ENCODE measurements at regions of chr10 and their contacts with region 1.

Region 1: GRCh38 chr10:125048101-125048864 is 106.4 kb downstream of the ZRANB1 start:
- DNase-seq: no peak
- ATAC-seq: peak; percentile 99
- H3K4me3 ChIP-seq: no peak overlapping the region
- H3K27ac ChIP-seq: no peak overlapping the region
- H3K4me1 ChIP-seq: no peaks in the 10 kb centered on the region
- H3K27me3 ChIP-seq: peaks cover 2 to 7% of the 10 kb centered on the region in 2 experiments; a peak in 3 of 4 replicates
- CTCF ChIP-seq: peak; percentile 95 to 96 (median 95)
- EP300 ChIP-seq: no peak
- POLR2A ChIP-seq: no peak
- RAD21 ChIP-seq: peak; percentile 94

Region 2: DNA sequence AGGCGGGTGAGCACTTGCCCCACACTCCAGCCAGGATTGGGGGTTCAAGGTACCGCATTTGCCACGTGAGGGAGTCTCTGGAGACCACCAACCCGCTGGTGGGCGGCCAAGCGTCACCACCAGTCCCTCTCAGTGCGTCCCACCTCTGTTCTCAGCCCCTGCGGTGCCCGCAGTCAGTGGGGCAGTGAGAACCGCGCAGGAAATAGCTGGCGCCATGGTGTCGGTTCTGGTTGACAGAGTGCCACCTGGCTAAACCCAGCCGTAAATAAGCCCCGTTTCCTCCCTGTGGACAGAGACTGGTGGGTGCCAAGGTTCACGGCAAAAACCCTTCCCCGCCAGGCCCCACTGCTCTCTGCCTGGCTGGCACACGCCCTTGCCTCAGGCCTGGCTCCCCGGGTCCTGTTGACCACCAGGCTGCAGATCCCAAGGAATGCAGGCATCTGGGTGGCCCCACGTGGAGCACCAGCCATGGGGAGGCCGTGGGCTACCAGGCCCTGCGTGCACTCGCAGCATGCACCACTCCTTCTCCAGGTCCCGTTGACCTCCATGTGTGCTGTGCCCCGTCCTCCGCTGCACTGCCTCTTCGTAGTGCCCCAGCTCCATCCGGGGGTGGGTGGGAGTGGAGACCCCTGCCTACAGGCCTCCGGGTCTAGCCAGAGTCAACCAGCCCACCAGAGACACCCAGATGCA is 446.7 kb before region 1 on chr10:
- CTCF ChIA-PET with region 1: no interaction called
- POLR2A ChIA-PET with region 1: no interaction called
- RAD21 ChIA-PET with region 1: no interaction called
- SMC1A ChIA-PET with region 1: no interaction called
- in situ Hi-C with region 1: no loop called
- intact Hi-C with region 1: no loop called
- DNase-seq: peak; percentile 34
- ATAC-seq: peak; percentile 70
- H3K4me3 ChIP-seq: no peak overlapping the region
- H3K27ac ChIP-seq: no peak overlapping the region
- H3K4me1 ChIP-seq: peaks cover 7% of the 10 kb centered on the region
- H3K27me3 ChIP-seq: no peaks in the 10 kb centered on the region
- CTCF ChIP-seq: no peak
- EP300 ChIP-seq: no peak
- POLR2A ChIP-seq: no peak
- RAD21 ChIP-seq: no peak

Region 3: GRCh38 chr10:124992462-124993344 is 55.6 kb before region 1 on chr10:
- CTCF ChIA-PET with region 1: interaction called, 13 read pairs
- POLR2A ChIA-PET with region 1: no interaction called
- RAD21 ChIA-PET with region 1: interaction called, 6 read pairs
- SMC1A ChIA-PET with region 1: no interaction called
- in situ Hi-C with region 1: no loop called
- intact Hi-C with region 1: no loop called
- DNase-seq: no peak
- ATAC-seq: peak; percentile 85
- H3K4me3 ChIP-seq: no peak overlapping the region
- H3K27ac ChIP-seq: no peak overlapping the region
- H3K4me1 ChIP-seq: peaks cover 9% of the 10 kb centered on the region
- H3K27me3 ChIP-seq: no peaks in the 10 kb centered on the region
- CTCF ChIP-seq: peak; percentile 29 to 52 (median 49)
- EP300 ChIP-seq: no peak
- POLR2A ChIP-seq: no peak
- RAD21 ChIP-seq: peak; percentile 33

Region 4: DNA sequence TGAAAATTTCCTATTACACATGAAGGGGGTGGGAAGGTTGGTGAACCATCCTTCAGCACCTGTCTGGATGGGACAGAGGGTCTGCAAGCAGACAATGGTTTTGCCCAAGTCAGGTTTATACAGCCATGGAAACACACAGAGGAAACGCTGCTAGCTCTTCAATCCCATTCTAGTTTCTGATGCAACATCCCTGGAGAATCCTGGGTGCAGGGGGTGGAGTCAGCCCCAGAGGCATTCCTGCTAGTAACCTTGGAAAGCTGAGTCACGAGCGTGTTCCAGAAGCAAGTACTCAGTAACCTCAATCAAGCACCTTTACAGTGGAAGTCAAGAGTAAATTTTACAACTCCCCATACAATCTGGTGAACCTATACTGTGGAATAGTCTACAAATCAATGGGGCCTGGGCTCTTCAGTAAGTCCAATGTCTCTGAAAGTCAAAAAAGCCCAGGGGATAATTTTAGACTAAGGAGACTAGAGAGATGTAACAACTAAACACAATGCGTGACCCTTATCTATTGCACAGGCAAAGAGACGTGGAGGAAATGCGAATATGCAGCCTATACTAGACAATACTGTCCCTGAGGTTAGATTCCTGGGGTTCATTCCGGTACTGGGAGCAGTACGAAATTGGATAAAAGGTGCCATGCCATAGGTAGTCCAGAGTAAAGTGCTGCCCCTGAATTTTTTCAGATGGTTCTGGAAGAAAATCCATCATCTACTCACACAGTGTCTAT is 11.0 kb before region 1 on chr10:
- CTCF ChIA-PET with region 1: interaction called, 11 read pairs
- POLR2A ChIA-PET with region 1: no interaction called
- RAD21 ChIA-PET with region 1: no interaction called
- SMC1A ChIA-PET with region 1: interaction called, 4 read pairs
- in situ Hi-C with region 1: no loop called
- intact Hi-C with region 1: no loop called
- DNase-seq: no peak
- ATAC-seq: no peak
- H3K4me3 ChIP-seq: no peak overlapping the region
- H3K27ac ChIP-seq: no peak overlapping the region
- H3K4me1 ChIP-seq: no peaks in the 10 kb centered on the region
- H3K27me3 ChIP-seq: no peaks in the 10 kb centered on the region
- CTCF ChIP-seq: no peak
- EP300 ChIP-seq: no peak
- POLR2A ChIP-seq: no peak
- RAD21 ChIP-seq: no peak

Region 5: DNA sequence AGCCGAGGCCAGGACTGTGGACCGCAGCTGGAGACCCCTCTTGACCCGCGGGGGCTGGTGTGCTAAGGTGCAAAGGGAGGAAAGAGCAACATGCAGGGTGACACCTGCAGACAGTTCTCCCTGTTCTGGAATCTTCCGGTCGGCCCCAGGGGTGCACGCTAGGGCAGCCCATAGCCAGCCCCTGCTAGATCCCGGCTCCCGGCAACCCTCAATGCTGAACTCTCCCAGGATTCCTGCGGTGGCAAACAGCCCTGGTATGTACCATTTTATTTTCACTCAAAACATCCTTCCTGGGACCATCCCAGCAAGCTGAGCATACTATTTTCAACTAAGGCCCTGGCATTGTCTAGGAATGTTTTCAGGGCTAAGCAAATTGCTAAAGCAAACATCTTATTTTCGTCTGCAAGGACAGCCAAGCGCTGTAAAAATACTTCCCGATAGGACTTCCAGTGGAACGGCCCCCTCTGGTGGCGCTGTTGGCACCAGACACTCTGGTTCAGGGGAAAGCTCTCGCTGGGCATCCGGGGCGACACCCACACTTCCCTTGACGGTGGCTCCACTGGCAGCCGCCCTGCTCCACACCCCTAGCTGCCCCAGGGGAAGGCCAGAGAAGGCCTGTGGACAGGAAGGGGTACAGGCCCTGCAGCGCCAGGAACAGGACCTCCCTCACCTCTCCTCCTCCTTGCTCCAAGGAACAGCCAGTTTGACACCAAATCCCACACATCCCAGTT is 12.7 kb after region 1 on chr10:
- CTCF ChIA-PET with region 1: interaction called, 31 read pairs
- POLR2A ChIA-PET with region 1: no interaction called
- RAD21 ChIA-PET with region 1: interaction called, 7 read pairs
- SMC1A ChIA-PET with region 1: interaction called, 9 read pairs
- in situ Hi-C with region 1: no loop called
- intact Hi-C with region 1: no loop called
- DNase-seq: no peak
- ATAC-seq: peak; percentile 13; the same call in 1 of the 3 replicates
- H3K4me3 ChIP-seq: no peak overlapping the region
- H3K27ac ChIP-seq: no peak overlapping the region
- H3K4me1 ChIP-seq: peaks cover 42% of the 10 kb centered on the region
- H3K27me3 ChIP-seq: peaks cover 0 to 5% of the 10 kb centered on the region in 2 experiments; a peak in 1 of 4 replicates
- CTCF ChIP-seq: peak; percentile 57 to 66 (median 61); a peak in 5 of 6 replicates
- EP300 ChIP-seq: no peak
- POLR2A ChIP-seq: no peak
- RAD21 ChIP-seq: peak; percentile 47

Region 6: DNA sequence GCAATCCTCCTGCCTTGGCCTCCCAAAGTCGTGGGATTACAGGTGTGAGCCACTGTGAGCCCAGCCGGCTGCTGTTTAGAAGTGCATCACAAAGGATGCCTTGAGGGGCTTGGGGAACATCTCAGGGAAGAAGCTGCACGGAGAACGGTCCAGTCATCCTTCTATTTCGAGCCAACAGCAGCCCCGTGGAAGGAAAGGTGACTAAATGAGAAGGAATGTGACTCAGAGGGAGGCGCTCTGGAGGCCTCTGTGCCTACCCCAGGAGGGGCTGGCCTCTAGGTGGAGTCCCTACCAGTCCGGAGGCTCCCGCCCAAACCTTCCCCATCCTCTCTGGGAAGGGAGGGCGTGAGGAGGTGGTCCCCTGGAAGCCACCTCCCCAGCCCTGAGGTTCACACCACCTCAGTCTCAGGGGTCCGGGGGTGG is 35.9 kb after region 1 on chr10:
- CTCF ChIA-PET with region 1: no interaction called
- POLR2A ChIA-PET with region 1: no interaction called
- RAD21 ChIA-PET with region 1: no interaction called
- SMC1A ChIA-PET with region 1: no interaction called
- in situ Hi-C with region 1: no loop called
- intact Hi-C with region 1: no loop called
- DNase-seq: no peak
- ATAC-seq: no peak
- H3K4me3 ChIP-seq: no peak overlapping the region
- H3K27ac ChIP-seq: no peak overlapping the region
- H3K4me1 ChIP-seq: no peaks in the 10 kb centered on the region
- H3K27me3 ChIP-seq: peaks cover 0 to 3% of the 10 kb centered on the region in 2 experiments; a peak in 2 of 4 replicates
- CTCF ChIP-seq: no peak
- EP300 ChIP-seq: no peak
- POLR2A ChIP-seq: no peak
- RAD21 ChIP-seq: no peak

Region 7: GRCh38 chr10:125113691-125114371 is 65.5 kb after region 1 on chr10:
- CTCF ChIA-PET with region 1: no interaction called
- POLR2A ChIA-PET with region 1: no interaction called
- RAD21 ChIA-PET with region 1: no interaction called
- SMC1A ChIA-PET with region 1: no interaction called
- in situ Hi-C with region 1: no loop called
- intact Hi-C with region 1: no loop called
- DNase-seq: no peak
- ATAC-seq: no peak
- H3K4me3 ChIP-seq: no peak overlapping the region
- H3K27ac ChIP-seq: no peak overlapping the region
- H3K4me1 ChIP-seq: no peaks in the 10 kb centered on the region
- H3K27me3 ChIP-seq: no peaks in the 10 kb centered on the region; a peak in 1 of 4 replicates
- CTCF ChIP-seq: no peak
- EP300 ChIP-seq: no peak
- POLR2A ChIP-seq: no peak
- RAD21 ChIP-seq: no peak

Region 8: GRCh38 chr10:125144693-125145623 is 96.7 kb after region 1 on chr10:
- CTCF ChIA-PET with region 1: interaction called, 5 read pairs
- POLR2A ChIA-PET with region 1: no interaction called
- RAD21 ChIA-PET with region 1: no interaction called
- SMC1A ChIA-PET with region 1: no interaction called
- in situ Hi-C with region 1: no loop called
- intact Hi-C with region 1: loop called (anchors 2 kb)
- DNase-seq: no peak
- ATAC-seq: peak; percentile 57
- H3K4me3 ChIP-seq: no peak overlapping the region
- H3K27ac ChIP-seq: no peak overlapping the region
- H3K4me1 ChIP-seq: peaks cover 3% of the 10 kb centered on the region; the same call in 1 of the 2 replicates
- H3K27me3 ChIP-seq: peaks cover 2 to 5% of the 10 kb centered on the region in 2 experiments; a peak in 2 of 4 replicates
- CTCF ChIP-seq: peak; percentile 20 to 32 (median 26); a peak in 3 of 6 replicates
- EP300 ChIP-seq: no peak
- POLR2A ChIP-seq: no peak
- RAD21 ChIP-seq: 0 out of 2 replicates have a peak, but pooled peaks have one; percentile 12

Region 9: DNA sequence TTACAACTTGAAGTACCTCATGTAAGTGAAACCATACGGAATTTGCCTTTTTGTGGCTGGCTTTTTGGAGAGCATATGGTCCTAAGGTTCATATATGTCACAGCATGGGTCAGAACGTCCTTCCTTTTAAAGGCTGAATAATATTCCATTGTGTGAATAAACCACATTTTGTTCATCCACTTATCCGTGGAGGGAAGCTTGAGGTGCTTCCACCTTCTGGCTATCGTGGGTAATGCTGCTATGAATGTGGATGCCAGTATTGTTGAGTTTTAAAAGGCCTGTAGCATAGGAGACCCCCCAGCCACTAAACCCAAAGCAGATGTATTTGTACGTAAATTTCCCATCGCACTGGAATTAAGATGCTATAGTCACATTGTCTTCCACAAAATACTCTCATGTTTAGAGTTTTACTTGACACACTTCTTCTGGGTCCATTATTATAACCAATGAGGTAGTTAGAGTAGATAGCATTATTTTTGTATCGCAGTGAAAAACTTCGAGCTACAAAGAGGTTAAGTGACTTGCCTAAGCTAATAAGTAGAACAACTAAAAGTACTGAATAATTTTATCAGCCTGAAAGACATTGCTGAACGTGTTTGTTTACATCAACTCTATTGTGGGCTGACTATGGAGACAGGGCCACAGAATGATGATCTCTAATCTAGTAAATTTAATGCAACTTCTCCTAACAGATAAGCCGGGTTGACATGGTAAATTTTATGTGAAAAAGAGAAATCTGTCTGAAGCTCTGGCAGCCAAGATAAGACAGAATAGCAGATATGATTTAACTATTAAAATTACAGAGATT is 295.0 kb after region 1 on chr10:
- CTCF ChIA-PET with region 1: interaction called, 11 read pairs
- POLR2A ChIA-PET with region 1: no interaction called
- RAD21 ChIA-PET with region 1: interaction called, 3 read pairs
- SMC1A ChIA-PET with region 1: interaction called, 11 read pairs
- in situ Hi-C with region 1: loop called (anchors 5 kb)
- intact Hi-C with region 1: loop called (anchors 1 kb)
- DNase-seq: no peak
- ATAC-seq: peak; percentile 52; the same call in 2 of the 3 replicates
- H3K4me3 ChIP-seq: no peak overlapping the region
- H3K27ac ChIP-seq: no peak overlapping the region
- H3K4me1 ChIP-seq: no peaks in the 10 kb centered on the region
- H3K27me3 ChIP-seq: no peaks in the 10 kb centered on the region
- CTCF ChIP-seq: peak; percentile 39 to 54 (median 53); a peak in 5 of 6 replicates
- EP300 ChIP-seq: no peak
- POLR2A ChIP-seq: no peak
- RAD21 ChIP-seq: peak; percentile 54

Region 10: GRCh38 chr10:125629763-125630376 is 581.6 kb after region 1 on chr10:
- CTCF ChIA-PET with region 1: interaction called, 13 read pairs
- POLR2A ChIA-PET with region 1: no interaction called
- RAD21 ChIA-PET with region 1: interaction called, 4 read pairs
- SMC1A ChIA-PET with region 1: no interaction called
- in situ Hi-C with region 1: loop called (anchors 5 kb)
- intact Hi-C with region 1: loop called (anchors 1 kb)
- DNase-seq: no peak
- ATAC-seq: peak; percentile 84
- H3K4me3 ChIP-seq: no peak overlapping the region
- H3K27ac ChIP-seq: no peak overlapping the region
- H3K4me1 ChIP-seq: no peaks in the 10 kb centered on the region
- H3K27me3 ChIP-seq: no peaks in the 10 kb centered on the region
- CTCF ChIP-seq: peak; percentile 39 to 46 (median 41); a peak in 5 of 6 replicates
- EP300 ChIP-seq: no peak
- POLR2A ChIP-seq: no peak
- RAD21 ChIP-seq: peak; percentile 44

Measured in GM12878 (cell line).